Ovary (tissue), 10 donors: ENCODE measurements at regions of chr2 and their contacts with region 1.

Region 1: GRCh38 chr2:34868137-34868536 is 1269.0 kb upstream of the FAM98A start:
- DNase-seq: no peak
- H3K4me3 ChIP-seq: no peak overlapping the region
- H3K27ac ChIP-seq: no peak overlapping the region
- H3K4me1 ChIP-seq: no peaks in the 10 kb centered on the region
- H3K27me3 ChIP-seq: no peaks in the 10 kb centered on the region
- CTCF ChIP-seq: no peak
- EP300 ChIP-seq: no peak
- POLR2A ChIP-seq: no peak

Region 2: GRCh38 chr2:34808426-34808825 is 59.7 kb before region 1 on chr2:
- intact Hi-C with region 1: no loop called
- DNase-seq: no peak
- H3K4me3 ChIP-seq: no peak overlapping the region
- H3K27ac ChIP-seq: no peak overlapping the region
- H3K4me1 ChIP-seq: no peaks in the 10 kb centered on the region
- H3K27me3 ChIP-seq: no peaks in the 10 kb centered on the region
- CTCF ChIP-seq: no peak
- EP300 ChIP-seq: no peak
- POLR2A ChIP-seq: no peak

Region 3: GRCh38 chr2:35184471-35184870 is 316.3 kb after region 1 on chr2:
- intact Hi-C with region 1: loop called in 1 of 4 experiments (anchors 5 kb)
- DNase-seq: no peak
- H3K4me3 ChIP-seq: no peak overlapping the region
- H3K27ac ChIP-seq: no peak overlapping the region
- H3K4me1 ChIP-seq: no peaks in the 10 kb centered on the region
- H3K27me3 ChIP-seq: no peaks in the 10 kb centered on the region
- CTCF ChIP-seq: no peak
- EP300 ChIP-seq: no peak
- POLR2A ChIP-seq: no peak